A673 (cell line): ENCODE measurements at regions of chr15 and their contacts with region 1.

Region 1: GRCh38 chr15:52227456-52227855 is 36.3 kb upstream of the GNB5 start:
- DNase-seq: peak; percentile 81
- H3K4me3 ChIP-seq: no peak overlapping the region
- H3K27ac ChIP-seq: no peak overlapping the region
- H3K4me1 ChIP-seq: no peaks in the 10 kb centered on the region
- H3K27me3 ChIP-seq: no peaks in the 10 kb centered on the region
- CTCF ChIP-seq: peak; percentile 79

Region 2: GRCh38 chr15:51425517-51426367 is 801.7 kb before region 1 on chr15:
- CTCF ChIA-PET with region 1: no interaction called
- POLR2A ChIA-PET with region 1: no interaction called
- intact Hi-C with region 1: no loop called
- DNase-seq: peak; percentile 38
- H3K4me3 ChIP-seq: no peak overlapping the region
- H3K27ac ChIP-seq: no peak overlapping the region
- H3K4me1 ChIP-seq: no peaks in the 10 kb centered on the region
- H3K27me3 ChIP-seq: no peaks in the 10 kb centered on the region
- CTCF ChIP-seq: no peak

Region 3: DNA sequence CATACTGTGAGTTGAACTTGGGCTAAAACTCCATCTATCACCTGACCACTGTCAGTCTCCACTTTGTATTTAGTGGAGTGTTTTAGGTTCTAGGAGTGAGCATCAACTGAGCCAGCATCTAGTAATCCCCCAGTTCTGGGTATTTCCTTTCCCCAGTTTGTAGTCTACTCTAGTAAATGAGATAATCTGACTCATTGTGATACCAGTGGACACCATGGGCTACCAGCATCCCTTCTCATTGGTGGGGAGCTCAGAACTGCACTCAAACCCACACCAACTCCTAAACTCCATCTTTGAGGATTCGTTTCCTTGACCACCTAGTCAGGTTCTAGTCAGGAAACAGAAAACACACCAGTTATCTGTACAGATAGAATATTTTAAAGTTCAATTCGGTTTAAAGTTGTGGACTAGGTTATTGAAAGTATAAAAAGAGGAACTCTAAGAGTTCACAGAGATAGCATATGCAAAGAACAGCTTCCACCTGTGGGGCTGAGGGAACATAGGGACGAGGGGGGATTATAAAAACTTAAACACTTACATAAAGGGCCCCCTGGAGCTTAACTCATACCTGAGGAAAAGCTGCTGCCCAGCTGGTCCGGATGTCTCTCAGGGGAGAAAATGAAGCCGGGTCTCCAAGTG is 291.9 kb before region 1 on chr15:
- CTCF ChIA-PET with region 1: no interaction called
- POLR2A ChIA-PET with region 1: interaction called, 16 read pairs
- intact Hi-C with region 1: no loop called
- DNase-seq: no peak
- H3K4me3 ChIP-seq: no peak overlapping the region
- H3K27ac ChIP-seq: no peak overlapping the region
- H3K4me1 ChIP-seq: no peaks in the 10 kb centered on the region
- H3K27me3 ChIP-seq: no peaks in the 10 kb centered on the region
- CTCF ChIP-seq: no peak

Region 4: GRCh38 chr15:51982013-51982769 is 245.3 kb before region 1 on chr15:
- CTCF ChIA-PET with region 1: no interaction called
- POLR2A ChIA-PET with region 1: no interaction called
- intact Hi-C with region 1: loop called (anchors 5 kb)
- DNase-seq: peak; percentile 88
- H3K4me3 ChIP-seq: peak overlapping the region; percentile 10
- H3K27ac ChIP-seq: peak overlapping the region; percentile 3
- H3K4me1 ChIP-seq: peaks cover 5% of the 10 kb centered on the region
- H3K27me3 ChIP-seq: no peaks in the 10 kb centered on the region
- CTCF ChIP-seq: peak; percentile 66

Region 5: DNA sequence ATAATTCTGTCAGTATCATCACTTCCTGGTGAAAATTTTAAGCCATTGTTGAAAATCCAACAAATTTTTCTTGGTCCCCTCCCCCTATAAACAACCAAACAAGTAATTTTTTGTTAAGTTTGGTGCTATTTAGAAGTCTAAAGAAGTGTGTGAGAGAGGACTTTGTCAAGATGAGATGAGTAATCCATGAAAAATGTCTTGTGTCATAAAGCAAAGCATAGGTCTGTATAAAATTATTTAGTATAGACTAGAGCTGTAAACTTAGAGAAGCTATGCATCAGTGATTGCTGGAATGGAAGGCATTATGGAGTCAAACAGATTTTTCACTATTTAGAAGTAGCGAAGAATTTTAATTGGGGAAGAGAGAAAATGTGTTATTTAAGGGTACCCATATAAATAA is 177.0 kb before region 1 on chr15:
- CTCF ChIA-PET with region 1: no interaction called
- POLR2A ChIA-PET with region 1: no interaction called
- intact Hi-C with region 1: no loop called
- DNase-seq: peak; percentile 36
- H3K4me3 ChIP-seq: no peak overlapping the region
- H3K27ac ChIP-seq: no peak overlapping the region
- H3K4me1 ChIP-seq: peaks cover 1% of the 10 kb centered on the region
- H3K27me3 ChIP-seq: no peaks in the 10 kb centered on the region
- CTCF ChIP-seq: no peak

Region 6: DNA sequence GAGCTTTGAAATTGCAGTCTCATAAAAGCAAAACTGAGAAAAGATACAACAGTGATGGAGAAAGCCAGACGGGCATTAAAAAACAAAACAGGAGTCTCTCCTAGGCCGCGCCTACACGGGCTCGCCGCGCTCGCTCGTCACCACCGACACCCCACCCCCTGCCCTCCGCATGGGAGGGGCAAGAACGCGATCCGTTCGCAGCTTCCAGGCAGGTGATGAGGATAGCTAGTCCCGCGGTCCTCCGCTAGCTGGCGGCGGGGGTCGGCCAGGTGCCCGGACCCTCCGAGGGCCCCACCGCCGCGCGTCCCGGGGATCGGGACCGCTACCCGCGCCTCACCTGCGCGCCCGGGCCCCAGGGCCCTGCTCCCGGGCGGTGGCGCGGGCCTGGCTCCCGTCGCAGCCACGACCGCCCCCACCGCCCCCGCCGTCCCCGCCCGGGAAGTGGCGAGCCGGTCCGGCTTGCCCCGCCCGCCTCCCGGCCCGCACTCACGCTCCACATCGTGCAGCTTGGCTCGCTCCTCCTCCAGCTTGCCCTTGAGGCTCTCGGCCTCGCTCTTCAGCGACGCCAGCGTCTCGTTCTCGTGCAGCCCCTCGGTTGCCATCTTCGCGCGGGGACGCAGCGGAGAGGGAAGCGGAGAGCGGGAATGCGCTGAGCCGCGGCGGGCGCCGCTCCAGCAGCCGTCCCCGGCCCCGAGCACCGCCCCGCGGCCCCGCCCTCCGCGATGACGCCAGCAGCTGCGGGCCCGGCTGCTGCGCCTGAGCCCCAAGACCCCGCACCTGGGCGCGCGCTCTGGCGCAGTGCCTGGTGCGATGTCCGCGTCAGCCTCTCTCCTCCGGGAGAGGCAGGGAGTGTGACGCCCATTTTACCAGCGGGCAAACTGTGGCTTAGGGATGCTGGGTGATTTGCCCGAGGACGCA is 47.9 kb before region 1 on chr15:
- CTCF ChIA-PET with region 1: no interaction called
- POLR2A ChIA-PET with region 1: no interaction called
- intact Hi-C with region 1: loop called (anchors 5 kb)
- DNase-seq: peak; percentile 84
- H3K4me3 ChIP-seq: peak overlapping the region; percentile 69
- H3K27ac ChIP-seq: peak overlapping the region; percentile 72
- H3K4me1 ChIP-seq: no peaks in the 10 kb centered on the region
- H3K27me3 ChIP-seq: no peaks in the 10 kb centered on the region
- CTCF ChIP-seq: no peak

Region 7: GRCh38 chr15:52324109-52324508 is 96.7 kb after region 1 on chr15:
- CTCF ChIA-PET with region 1: interaction called, 10 read pairs
- POLR2A ChIA-PET with region 1: no interaction called
- intact Hi-C with region 1: no loop called
- DNase-seq: no peak
- H3K4me3 ChIP-seq: no peak overlapping the region
- H3K27ac ChIP-seq: no peak overlapping the region
- H3K4me1 ChIP-seq: no peaks in the 10 kb centered on the region
- H3K27me3 ChIP-seq: no peaks in the 10 kb centered on the region
- CTCF ChIP-seq: no peak

Region 8: DNA sequence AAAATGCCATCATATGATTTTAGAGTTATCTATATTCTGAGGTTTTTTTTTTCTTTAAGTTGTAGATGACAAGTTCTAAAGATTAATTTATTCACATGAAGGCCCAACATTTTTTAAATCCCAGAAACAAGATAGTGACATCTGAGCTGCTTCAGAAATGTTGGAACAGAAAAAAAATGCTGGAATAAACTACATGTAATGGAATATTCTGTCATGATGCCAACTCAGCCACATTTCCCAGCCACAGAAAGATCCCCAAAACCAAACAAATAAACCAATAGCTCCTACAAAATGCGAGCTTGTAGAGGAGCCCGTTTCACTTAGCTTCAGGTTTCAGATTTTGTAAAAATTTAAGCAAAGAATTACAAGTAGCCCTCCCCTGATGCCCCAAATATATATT is 179.1 kb after region 1 on chr15:
- CTCF ChIA-PET with region 1: no interaction called
- POLR2A ChIA-PET with region 1: no interaction called
- intact Hi-C with region 1: no loop called
- DNase-seq: no peak
- H3K4me3 ChIP-seq: no peak overlapping the region
- H3K27ac ChIP-seq: no peak overlapping the region
- H3K4me1 ChIP-seq: no peaks in the 10 kb centered on the region
- H3K27me3 ChIP-seq: no peaks in the 10 kb centered on the region
- CTCF ChIP-seq: no peak

Region 9: DNA sequence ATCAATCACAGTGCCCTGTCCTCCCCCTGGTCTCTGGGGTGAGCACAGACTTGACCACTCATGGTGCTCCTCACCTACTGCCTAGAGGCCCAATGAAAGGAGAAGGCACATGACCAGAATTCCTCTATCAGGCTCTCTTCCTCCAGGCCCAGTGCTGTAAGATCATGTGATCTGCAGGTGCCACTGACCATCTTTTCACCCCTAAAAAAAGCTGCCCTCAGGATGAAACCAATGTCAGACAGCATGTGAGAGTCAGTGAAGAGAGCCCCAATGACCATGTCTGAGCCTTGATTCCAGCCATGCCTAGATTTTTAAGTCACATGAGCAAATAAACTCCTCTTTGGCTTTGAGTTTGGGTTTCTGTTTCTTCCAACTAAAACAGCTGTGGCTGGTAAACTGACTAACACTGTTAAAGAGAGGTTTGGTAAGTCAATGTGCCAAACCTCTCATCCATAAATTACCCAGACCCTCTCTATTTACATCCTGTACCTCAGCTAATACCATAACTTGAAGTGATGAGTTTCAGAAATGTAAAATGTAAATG is 292.9 kb after region 1 on chr15:
- CTCF ChIA-PET with region 1: no interaction called
- POLR2A ChIA-PET with region 1: interaction called, 12 read pairs
- intact Hi-C with region 1: no loop called
- DNase-seq: no peak
- H3K4me3 ChIP-seq: no peak overlapping the region
- H3K27ac ChIP-seq: no peak overlapping the region
- H3K4me1 ChIP-seq: no peaks in the 10 kb centered on the region
- H3K27me3 ChIP-seq: no peaks in the 10 kb centered on the region
- CTCF ChIP-seq: no peak